Thyroid gland (tissue), 4 donors: ENCODE measurements at regions of chr11 and their contacts with region 1.

Region 1: GRCh38 chr11:79493555-79494171 is 52.8 kb upstream of the TENM4 start:
- DNase-seq: peak; percentile 78 to 84
- H3K4me3 ChIP-seq: no peak overlapping the region
- H3K27ac ChIP-seq: no peak overlapping the region
- H3K4me1 ChIP-seq: no peaks in the 10 kb centered on the region
- H3K27me3 ChIP-seq: no peaks in the 10 kb centered on the region
- CTCF ChIP-seq: peak; percentile 76 to 95 (median 83)
- POLR2A ChIP-seq: no peak

Region 2: DNA sequence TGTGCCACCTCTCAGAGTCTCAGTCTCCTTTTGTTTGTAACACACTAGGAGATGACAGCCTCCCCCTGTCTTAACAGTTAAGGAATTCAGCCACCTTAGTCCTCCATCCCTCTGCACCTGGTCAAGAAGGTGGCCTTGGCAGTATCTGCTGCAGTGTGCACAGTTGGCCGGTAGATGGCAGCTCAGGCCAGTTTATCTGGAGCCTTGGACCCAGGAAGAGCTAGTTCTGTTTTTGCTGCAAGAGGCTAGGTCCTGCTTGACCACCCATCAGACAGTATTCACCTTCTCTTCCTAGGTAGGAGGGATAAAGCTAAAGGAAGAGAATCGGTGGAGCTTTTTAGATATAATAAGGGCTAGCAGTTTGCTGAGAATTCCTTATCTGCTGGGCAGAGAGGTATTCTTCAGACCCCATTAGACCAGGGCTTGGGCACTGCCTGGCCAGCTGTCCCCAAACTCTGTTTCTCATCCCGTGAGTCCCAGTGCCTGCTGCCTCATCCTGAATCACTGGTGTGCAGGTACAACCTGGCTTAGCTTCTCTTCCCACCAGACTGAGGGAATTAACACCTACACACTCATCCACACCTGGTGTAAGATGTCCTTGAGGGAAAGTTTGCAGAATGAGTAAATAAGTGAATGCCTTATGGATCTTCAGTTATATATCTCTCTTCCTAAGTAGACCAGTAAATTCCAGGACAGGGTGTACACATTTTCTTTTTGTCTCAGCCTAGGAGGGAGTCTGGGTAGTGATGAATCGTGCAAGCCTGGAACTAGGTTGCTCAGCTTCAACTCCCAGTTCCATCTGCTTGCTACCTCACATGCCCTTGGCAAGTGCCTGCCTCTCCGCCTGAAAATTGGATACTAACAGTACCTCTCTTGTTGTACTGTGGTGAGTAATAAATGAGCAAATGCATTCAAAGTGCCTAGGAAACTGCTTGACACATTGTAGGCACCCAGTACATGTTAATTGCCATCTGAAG is 848.1 kb before region 1 on chr11:
- intact Hi-C with region 1: loop called (anchors 10 kb)
- DNase-seq: peak; percentile 78 to 81
- H3K4me3 ChIP-seq: no peak overlapping the region
- H3K27ac ChIP-seq: no peak overlapping the region
- H3K4me1 ChIP-seq: no peaks in the 10 kb centered on the region
- H3K27me3 ChIP-seq: no peaks in the 10 kb centered on the region
- CTCF ChIP-seq: peak; percentile 75 to 97 (median 94)
- POLR2A ChIP-seq: no peak

Region 3: DNA sequence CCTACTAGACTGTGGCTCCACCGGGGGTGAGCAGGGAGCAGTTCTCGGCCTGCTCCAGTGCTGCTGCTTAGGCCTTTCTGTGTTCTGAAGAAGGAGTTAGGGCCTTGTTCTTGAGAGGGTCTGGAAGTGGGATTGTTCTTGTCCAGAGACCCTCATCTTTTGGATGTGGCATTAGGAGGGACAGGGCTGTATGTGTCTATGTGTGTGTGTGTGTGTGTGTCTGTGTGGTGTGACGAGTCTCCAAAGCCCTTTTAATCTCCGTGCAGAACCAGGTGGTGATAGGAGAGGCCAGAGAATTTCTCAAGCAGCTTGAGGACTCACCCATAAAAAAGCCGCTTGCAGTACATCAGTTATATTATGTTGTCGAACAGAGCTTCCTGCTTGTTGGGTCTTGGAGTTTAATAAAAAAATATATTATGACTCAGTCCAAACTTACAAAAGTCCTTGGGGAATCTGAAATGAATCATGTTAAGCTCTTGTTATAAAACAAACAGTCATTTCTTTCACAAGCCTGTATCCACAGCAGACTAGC is 249.4 kb before region 1 on chr11:
- intact Hi-C with region 1: loop called (anchors 10 kb)
- DNase-seq: no peak
- H3K4me3 ChIP-seq: no peak overlapping the region
- H3K27ac ChIP-seq: no peak overlapping the region
- H3K4me1 ChIP-seq: peaks cover 0 to 6% of the 10 kb centered on the region in 2 donors
- H3K27me3 ChIP-seq: no peaks in the 10 kb centered on the region
- CTCF ChIP-seq: no peak
- POLR2A ChIP-seq: no peak

Region 4: DNA sequence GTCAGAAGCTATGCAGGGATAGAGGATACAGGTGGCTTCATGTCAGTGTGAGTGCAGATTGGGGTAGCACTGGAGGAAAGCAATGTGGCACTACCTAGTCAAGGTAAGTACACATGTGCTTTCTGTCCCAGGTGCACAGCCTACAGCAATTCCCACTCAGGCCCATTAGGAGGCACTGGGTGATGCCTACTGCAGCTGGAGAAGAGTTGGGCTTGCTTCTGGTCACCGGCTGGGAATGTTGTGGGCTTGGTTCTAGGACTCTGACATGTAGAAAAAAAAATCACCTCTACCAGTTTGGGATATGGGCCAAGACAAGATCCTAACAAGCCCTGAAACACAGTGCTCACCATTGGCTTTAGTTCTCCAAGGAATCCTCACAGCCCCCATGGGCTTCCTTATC is 122.5 kb before region 1 on chr11:
- intact Hi-C with region 1: no loop called
- DNase-seq: peak in 1 of 2 donors; percentile 28
- H3K4me3 ChIP-seq: no peak overlapping the region
- H3K27ac ChIP-seq: no peak overlapping the region
- H3K4me1 ChIP-seq: no peaks in the 10 kb centered on the region
- H3K27me3 ChIP-seq: no peaks in the 10 kb centered on the region
- CTCF ChIP-seq: peak in 2 of 6 experiments; percentile 14 to 24
- POLR2A ChIP-seq: no peak

Region 5: DNA sequence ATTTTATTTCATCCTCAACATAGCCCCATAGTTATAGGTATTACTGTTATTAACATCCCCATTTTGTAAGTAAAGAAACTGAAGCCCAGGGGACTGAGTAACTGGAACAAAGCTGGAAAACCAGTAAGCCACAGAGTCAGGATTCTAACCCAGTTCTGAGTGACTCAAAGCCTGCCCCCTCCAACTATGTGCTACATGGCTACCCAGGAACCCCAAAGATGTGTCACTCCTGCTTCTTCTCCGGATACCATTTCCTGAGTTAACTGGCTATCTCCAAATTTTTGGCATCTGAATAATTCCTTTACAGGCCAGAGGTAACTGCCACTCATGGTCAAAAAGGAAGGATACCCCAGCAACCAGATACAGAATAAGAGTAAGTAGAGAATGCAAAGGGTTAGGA is 96.4 kb before region 1 on chr11:
- intact Hi-C with region 1: loop called (anchors 5 kb)
- DNase-seq: no peak
- H3K4me3 ChIP-seq: no peak overlapping the region
- H3K27ac ChIP-seq: no peak overlapping the region
- H3K4me1 ChIP-seq: peaks cover 3 to 13% of the 10 kb centered on the region in 2 donors
- H3K27me3 ChIP-seq: no peaks in the 10 kb centered on the region
- CTCF ChIP-seq: no peak
- POLR2A ChIP-seq: no peak